CD4-positive, alpha-beta memory T cell (primary cell): ENCODE measurements at regions of chr19 and their contacts with region 1.

Region 1: DNA sequence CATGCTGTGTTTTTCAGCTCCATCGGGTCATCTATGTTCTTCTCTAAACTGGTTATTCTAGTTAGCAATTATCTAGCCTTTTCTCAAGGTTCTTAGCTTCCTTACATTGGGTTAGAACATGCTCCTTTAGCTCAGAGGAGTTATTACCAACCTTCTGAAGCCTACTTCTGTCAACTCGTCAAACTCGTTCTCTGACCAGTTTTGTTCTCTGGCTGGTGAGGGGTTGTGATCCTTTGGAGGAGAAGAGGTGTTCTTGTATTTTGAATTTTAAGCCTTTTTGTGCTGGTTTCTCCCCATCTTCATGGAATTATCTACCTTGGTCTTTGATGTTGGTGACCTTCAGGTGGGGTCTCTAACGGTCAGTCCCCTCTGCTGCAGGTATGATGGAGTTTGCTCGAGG is 20.9 kb downstream of the LGALS13 start:
- DNase-seq: no peak
- H3K4me3 ChIP-seq: no peak overlapping the region
- H3K4me3 Mint-ChIP-seq: no peak overlapping the region
- H3K27ac ChIP-seq: no peak overlapping the region
- H3K27ac Mint-ChIP-seq: no peak overlapping the region
- H3K4me1 ChIP-seq: no peaks in the 10 kb centered on the region
- H3K4me1 Mint-ChIP-seq: no peaks in the 10 kb centered on the region
- H3K27me3 ChIP-seq: no peaks in the 10 kb centered on the region
- H3K27me3 Mint-ChIP-seq: peaks cover 46 to 51% of the 10 kb centered on the region in 2 donors

Region 2: GRCh38 chr19:39308531-39309304 is 314.5 kb before region 1 on chr19:
- CTCF ChIA-PET with region 1: no interaction called
- POLR2A ChIA-PET with region 1: no interaction called
- intact Hi-C with region 1: no loop called
- DNase-seq: no peak
- H3K4me3 ChIP-seq: no peak overlapping the region
- H3K4me3 Mint-ChIP-seq: peak overlapping the region in 1 of 8 donors; percentile 17
- H3K27ac ChIP-seq: no peak overlapping the region
- H3K27ac Mint-ChIP-seq: peak overlapping the region in 3 of 7 donors; percentile 36 to 55 (median 44)
- H3K4me1 ChIP-seq: no peaks in the 10 kb centered on the region
- H3K4me1 Mint-ChIP-seq: peaks cover 2 to 16% (median 4%) of the 10 kb centered on the region in 4 donors
- H3K27me3 ChIP-seq: no peaks in the 10 kb centered on the region
- H3K27me3 Mint-ChIP-seq: no peaks in the 10 kb centered on the region

Region 3: DNA sequence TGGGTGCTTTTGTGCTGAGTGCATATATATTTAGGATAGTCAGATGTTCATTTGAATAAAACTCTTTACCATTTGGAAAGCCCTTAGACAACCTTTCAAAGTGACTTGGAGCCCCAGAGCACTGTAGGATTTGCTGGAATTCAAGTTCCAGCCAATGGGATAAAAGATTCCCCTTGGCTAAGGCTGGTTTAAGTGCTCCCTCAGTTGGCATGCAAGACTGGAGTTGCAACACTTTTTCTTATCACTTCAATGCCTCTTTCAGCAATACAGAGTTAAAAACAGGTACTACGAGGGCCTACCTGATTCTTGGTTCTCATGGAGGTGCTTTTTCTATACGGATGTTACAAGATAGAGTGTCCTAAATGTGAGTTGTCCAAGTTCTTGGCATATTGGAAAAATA is 46.7 kb before region 1 on chr19:
- CTCF ChIA-PET with region 1: no interaction called
- POLR2A ChIA-PET with region 1: no interaction called
- intact Hi-C with region 1: loop called (anchors 10 kb)
- DNase-seq: no peak
- H3K4me3 ChIP-seq: no peak overlapping the region
- H3K4me3 Mint-ChIP-seq: no peak overlapping the region
- H3K27ac ChIP-seq: no peak overlapping the region
- H3K27ac Mint-ChIP-seq: no peak overlapping the region
- H3K4me1 ChIP-seq: no peaks in the 10 kb centered on the region
- H3K4me1 Mint-ChIP-seq: no peaks in the 10 kb centered on the region
- H3K27me3 ChIP-seq: no peaks in the 10 kb centered on the region
- H3K27me3 Mint-ChIP-seq: peaks cover 31 to 58% of the 10 kb centered on the region in 2 donors

Region 4: GRCh38 chr19:39655613-39656012 is 32.4 kb after region 1 on chr19 and contains the start of gene LGALS16:
- CTCF ChIA-PET with region 1: no interaction called
- POLR2A ChIA-PET with region 1: no interaction called
- intact Hi-C with region 1: no loop called
- DNase-seq: no peak
- H3K4me3 ChIP-seq: no peak within 1 kb of the TSS
- H3K4me3 Mint-ChIP-seq: no peak within 1 kb of the TSS
- H3K27ac ChIP-seq: no peak within 1 kb of the TSS
- H3K27ac Mint-ChIP-seq: no peak within 1 kb of the TSS
- H3K4me1 ChIP-seq: no peaks in the 10 kb centered on the region
- H3K4me1 Mint-ChIP-seq: no peaks in the 10 kb centered on the region
- H3K27me3 ChIP-seq: no peaks in the 10 kb centered on the region
- H3K27me3 Mint-ChIP-seq: peaks cover 16 to 27% of the 10 kb centered on the region in 2 donors
- total RNA-seq, gene LGALS16: not detected